Endothelial cell of umbilical vein (primary cell): ENCODE measurements at regions of chr3 and their contacts with region 1.

Region 1: DNA sequence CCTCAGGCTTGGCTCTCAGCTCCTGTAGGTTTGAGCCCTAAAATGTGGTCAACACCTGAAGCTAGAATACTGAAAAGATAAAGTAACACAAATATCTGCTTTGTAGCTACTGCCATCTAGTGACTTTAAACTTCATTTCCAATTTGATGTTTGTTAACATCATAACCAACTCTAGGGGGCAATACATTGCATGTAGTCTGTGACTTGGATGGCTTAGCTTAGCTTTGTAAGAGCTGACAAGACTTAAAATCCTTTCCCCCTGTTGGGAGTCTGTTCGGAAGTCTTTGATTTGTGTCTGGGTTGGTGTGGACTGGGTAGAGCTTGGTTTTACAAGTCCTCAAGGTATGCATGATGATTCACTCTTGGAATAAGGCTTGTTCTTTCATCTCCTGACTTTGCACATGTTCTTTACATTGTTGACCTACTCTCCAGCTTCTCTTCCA is 51.7 kb downstream of the SCN11A start:
- DNase-seq: peak; percentile 70
- H3K4me3 ChIP-seq: no peak overlapping the region
- H3K27ac ChIP-seq: no peak overlapping the region
- H3K4me1 ChIP-seq: no peaks in the 10 kb centered on the region
- H3K27me3 ChIP-seq: no peaks in the 10 kb centered on the region
- CTCF ChIP-seq: peak; percentile 62 to 71
- POLR2A ChIP-seq: no peak

Region 2: DNA sequence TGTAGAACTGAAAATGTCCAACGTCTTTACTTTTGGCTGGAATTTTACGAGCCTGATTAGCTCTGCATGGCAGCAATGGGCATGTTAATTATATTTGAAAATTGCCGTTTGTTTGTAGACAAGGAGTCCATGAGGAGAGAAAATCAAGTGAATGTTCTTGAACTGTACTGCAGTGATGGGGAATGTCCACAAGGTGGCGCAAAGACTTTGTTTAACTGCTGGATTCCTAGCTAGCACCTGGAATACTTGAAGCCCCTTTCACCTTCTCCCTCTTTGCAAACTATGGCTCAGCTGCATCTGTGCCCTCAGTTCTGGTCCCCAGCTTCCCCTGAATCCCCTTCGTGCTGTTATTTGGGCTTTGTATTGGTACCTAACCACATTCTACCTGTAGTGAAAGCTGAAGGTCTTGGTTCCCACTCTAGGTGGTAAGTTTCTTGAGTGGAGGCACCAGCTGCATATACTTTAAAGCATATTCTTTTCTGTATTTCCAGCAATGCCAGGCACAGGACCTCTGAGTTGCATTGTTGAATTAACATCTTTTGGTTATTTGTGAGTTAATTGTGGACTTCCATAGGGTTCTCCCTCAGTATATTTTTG is 478.5 kb before region 1 on chr3:
- CTCF ChIA-PET with region 1: interaction called, 25 read pairs
- POLR2A ChIA-PET with region 1: no interaction called
- dilution Hi-C with region 1: no loop called
- intact Hi-C with region 1: loop called (anchors 1 kb)
- DNase-seq: peak; percentile 81
- H3K4me3 ChIP-seq: no peak overlapping the region
- H3K27ac ChIP-seq: no peak overlapping the region
- H3K4me1 ChIP-seq: peaks cover 4% of the 10 kb centered on the region
- H3K27me3 ChIP-seq: no peaks in the 10 kb centered on the region
- CTCF ChIP-seq: peak; percentile 84
- POLR2A ChIP-seq: no peak

Region 3: DNA sequence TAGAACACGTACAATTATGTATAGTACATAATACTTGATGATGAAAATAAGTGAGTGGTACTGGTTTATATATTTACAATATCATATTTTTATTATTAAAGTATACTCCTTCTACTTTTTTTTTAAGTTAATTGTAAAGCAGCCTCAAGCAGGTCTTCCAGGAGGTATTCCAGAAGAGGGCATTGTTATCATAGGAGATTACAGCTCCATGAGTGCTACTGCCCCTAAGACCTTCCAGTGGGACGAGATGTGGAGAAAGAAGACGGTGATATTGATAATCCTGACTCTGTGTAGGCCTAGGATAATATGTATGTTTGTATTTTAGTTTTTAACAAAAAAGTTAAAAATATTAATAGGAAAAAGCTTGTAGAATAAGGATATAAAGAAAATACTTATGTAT is 310.3 kb before region 1 on chr3:
- CTCF ChIA-PET with region 1: interaction called, 13 read pairs
- POLR2A ChIA-PET with region 1: no interaction called
- dilution Hi-C with region 1: no loop called
- intact Hi-C with region 1: no loop called
- DNase-seq: peak; percentile 13
- H3K4me3 ChIP-seq: no peak overlapping the region
- H3K27ac ChIP-seq: no peak overlapping the region
- H3K4me1 ChIP-seq: no peaks in the 10 kb centered on the region
- H3K27me3 ChIP-seq: no peaks in the 10 kb centered on the region
- CTCF ChIP-seq: no peak
- POLR2A ChIP-seq: no peak

Region 4: DNA sequence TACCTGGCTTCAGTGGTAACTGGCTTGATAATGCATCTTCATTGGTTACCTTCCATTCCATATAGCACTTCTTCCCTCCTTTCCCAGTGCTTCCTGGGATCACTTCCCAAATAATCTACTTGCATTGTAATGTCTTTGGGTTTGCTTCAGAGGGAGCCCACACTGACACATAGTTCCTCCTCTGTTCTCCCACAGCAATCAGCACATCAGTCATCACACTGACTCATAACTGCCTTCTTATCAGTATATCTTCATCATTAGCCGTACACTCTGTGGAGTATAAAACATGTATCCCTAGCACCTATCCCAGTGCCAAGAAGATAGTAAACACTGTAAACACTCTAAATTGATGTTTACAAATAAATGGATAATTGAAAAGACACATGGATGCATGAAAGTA is 92.6 kb before region 1 on chr3:
- CTCF ChIA-PET with region 1: interaction called, 8 read pairs
- POLR2A ChIA-PET with region 1: no interaction called
- dilution Hi-C with region 1: no loop called
- intact Hi-C with region 1: loop called (anchors 5 kb)
- DNase-seq: no peak
- H3K4me3 ChIP-seq: no peak overlapping the region
- H3K27ac ChIP-seq: no peak overlapping the region
- H3K4me1 ChIP-seq: no peaks in the 10 kb centered on the region
- H3K27me3 ChIP-seq: peaks cover 0 to 2% of the 10 kb centered on the region in 2 experiments
- CTCF ChIP-seq: no peak
- POLR2A ChIP-seq: no peak

Region 5: GRCh38 chr3:38985581-38985980 is 14.4 kb before region 1 on chr3:
- CTCF ChIA-PET with region 1: interaction called, 18 read pairs
- POLR2A ChIA-PET with region 1: no interaction called
- dilution Hi-C with region 1: no loop called
- intact Hi-C with region 1: no loop called
- DNase-seq: no peak
- H3K4me3 ChIP-seq: no peak overlapping the region
- H3K27ac ChIP-seq: no peak overlapping the region
- H3K4me1 ChIP-seq: peaks cover 6% of the 10 kb centered on the region
- H3K27me3 ChIP-seq: peaks cover 0 to 1% of the 10 kb centered on the region in 2 experiments
- CTCF ChIP-seq: no peak
- POLR2A ChIP-seq: no peak

Region 6: GRCh38 chr3:39028546-39028945 is 28.5 kb after region 1 on chr3:
- CTCF ChIA-PET with region 1: interaction called, 22 read pairs
- POLR2A ChIA-PET with region 1: no interaction called
- dilution Hi-C with region 1: no loop called
- intact Hi-C with region 1: no loop called
- DNase-seq: no peak
- H3K4me3 ChIP-seq: no peak overlapping the region
- H3K27ac ChIP-seq: no peak overlapping the region
- H3K4me1 ChIP-seq: no peaks in the 10 kb centered on the region
- H3K27me3 ChIP-seq: peaks cover 11 to 16% of the 10 kb centered on the region in 2 experiments
- CTCF ChIP-seq: no peak
- POLR2A ChIP-seq: no peak